Aorta (tissue), 5 donors: ENCODE measurements at regions of chr9 and their contacts with region 1.

Region 1: GRCh38 chr9:124652203-124652992 is 118.7 kb downstream of the NR6A1 start:
- DNase-seq: no peak
- ATAC-seq: no peak
- H3K4me3 ChIP-seq: no peak overlapping the region
- H3K27ac ChIP-seq: no peak overlapping the region
- H3K4me1 ChIP-seq: peaks cover 0 to 7% of the 10 kb centered on the region in 2 donors
- H3K27me3 ChIP-seq: no peaks in the 10 kb centered on the region

Region 2: GRCh38 chr9:124574534-124575341 is 77.7 kb before region 1 on chr9:
- intact Hi-C with region 1: no loop called
- DNase-seq: no peak
- ATAC-seq: no peak
- H3K4me3 ChIP-seq: no peak overlapping the region
- H3K27ac ChIP-seq: no peak overlapping the region
- H3K4me1 ChIP-seq: no peaks in the 10 kb centered on the region
- H3K27me3 ChIP-seq: no peaks in the 10 kb centered on the region

Region 3: GRCh38 chr9:124617471-124618141 is 34.8 kb before region 1 on chr9:
- intact Hi-C with region 1: no loop called
- DNase-seq: peak; percentile 82 to 91
- ATAC-seq: peak; percentile 86
- H3K4me3 ChIP-seq: no peak overlapping the region
- H3K27ac ChIP-seq: no peak overlapping the region
- H3K4me1 ChIP-seq: no peaks in the 10 kb centered on the region
- H3K27me3 ChIP-seq: no peaks in the 10 kb centered on the region

Region 4: DNA sequence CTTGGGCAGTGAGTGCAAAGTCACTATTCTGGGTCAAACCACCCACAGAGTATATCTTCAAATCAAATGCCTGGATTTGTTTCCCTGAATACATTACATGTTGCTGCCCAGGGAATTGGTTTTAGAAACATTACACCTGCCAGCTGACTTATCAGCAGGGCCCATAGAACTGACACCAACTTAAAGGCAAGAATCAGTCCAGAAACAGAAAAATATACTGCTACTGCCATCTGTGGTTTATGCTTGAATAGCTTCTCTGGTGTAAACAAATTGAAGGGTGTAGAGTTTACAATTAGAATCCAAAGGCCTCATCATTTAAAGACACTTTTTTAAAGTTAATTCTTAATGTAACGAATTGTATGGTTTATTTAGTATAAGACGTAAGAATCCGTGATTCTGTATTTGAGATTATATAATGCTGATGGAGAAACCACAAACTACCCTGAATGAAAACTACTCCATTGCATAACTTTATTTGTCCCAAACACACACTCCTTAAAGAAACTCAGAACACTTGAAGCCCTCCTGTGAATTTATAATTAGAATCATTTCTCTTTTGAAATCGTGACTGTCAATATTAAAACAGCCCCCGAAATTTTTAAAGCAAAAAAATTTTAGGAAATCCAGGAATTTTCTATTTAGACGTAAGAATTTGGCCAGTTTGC is 112.5 kb after region 1 on chr9:
- intact Hi-C with region 1: loop called in 1 of 2 experiments (anchors 5 kb)
- DNase-seq: no peak
- ATAC-seq: no peak
- H3K4me3 ChIP-seq: no peak overlapping the region
- H3K27ac ChIP-seq: no peak overlapping the region
- H3K4me1 ChIP-seq: no peaks in the 10 kb centered on the region
- H3K27me3 ChIP-seq: no peaks in the 10 kb centered on the region